ENCODE measurements at regions of chr15 and their contacts with region 1.

Region 1: DNA sequence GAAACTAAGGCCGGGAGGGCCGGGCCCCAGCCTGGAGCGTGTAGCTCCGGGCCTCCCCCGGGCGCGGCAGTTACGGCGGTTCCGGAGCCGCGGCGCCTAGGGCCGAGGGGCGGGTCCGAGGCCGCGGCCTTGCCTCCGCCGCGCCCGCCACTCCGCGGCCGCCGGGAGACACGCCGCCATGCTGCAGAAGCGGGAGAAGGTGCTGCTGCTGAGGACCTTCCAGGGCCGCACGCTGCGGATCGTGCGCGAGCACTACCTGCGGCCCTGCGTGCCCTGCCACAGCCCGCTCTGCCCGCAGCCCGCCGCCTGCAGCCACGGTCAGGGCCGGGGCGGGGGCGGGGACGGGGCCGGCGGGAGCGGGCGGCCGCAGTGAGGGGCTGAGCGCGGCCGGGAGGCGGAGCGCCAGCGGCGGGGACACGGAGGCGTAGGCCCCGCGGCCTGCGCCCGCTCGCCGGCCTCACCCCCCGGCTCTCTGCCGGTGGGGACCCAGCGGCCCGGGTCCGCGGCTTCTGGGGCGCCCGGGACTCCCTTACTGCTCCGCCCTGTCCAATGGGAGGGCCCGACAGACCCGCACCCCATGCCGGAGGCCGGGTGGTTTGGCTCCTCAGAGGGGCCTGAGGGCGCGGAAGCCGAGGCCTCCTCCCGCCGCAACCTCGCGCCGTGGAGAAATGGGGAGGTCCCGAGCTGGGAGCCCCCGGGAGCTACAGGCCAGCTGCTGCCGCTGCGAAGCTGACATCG is at the start of gene DIS3L:
- DNase-seq: peak in 1 of 2 experiments; percentile 52
- H3K4me3 ChIP-seq: peak within 1 kb of the TSS; percentile 52
- H3K27ac ChIP-seq: peak within 1 kb of the TSS; percentile 57
- H3K4me1 ChIP-seq: peaks cover 28% of the 10 kb centered on the region
- H3K27me3 ChIP-seq: no peaks in the 10 kb centered on the region
- CTCF ChIP-seq: no peak
- total RNA-seq, gene DIS3L: 27.7 and 31.2 TPM in 2 replicates

Region 2: DNA sequence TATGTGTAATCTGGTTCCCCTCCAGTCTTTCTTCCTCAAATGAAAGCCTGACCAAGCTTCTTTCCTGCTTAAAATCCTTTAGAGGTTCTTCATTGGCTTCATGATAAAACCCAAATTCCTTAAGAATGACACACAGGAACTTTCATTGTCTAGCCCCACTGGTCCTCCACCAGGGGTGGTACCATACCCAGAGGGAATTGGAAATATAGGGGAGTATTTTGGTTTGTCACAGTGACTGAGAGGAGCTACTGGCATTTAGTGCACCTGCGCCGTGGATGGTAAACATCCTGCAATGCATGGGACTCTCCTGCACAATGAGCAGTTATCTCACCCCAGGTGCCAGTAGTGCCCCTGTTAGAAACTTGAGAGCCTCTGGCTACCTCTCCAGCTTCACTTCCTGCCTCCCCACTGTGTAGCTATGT is 222.3 kb after region 1 on chr15:
- CTCF ChIA-PET with region 1: no interaction called
- POLR2A ChIA-PET with region 1: interaction called, 12 read pairs
- intact Hi-C with region 1: no loop called
- DNase-seq: peak; percentile 56 to 58
- H3K4me3 ChIP-seq: no peak overlapping the region
- H3K27ac ChIP-seq: peak overlapping the region; percentile 39
- H3K4me1 ChIP-seq: peaks cover 12% of the 10 kb centered on the region
- H3K27me3 ChIP-seq: no peaks in the 10 kb centered on the region
- CTCF ChIP-seq: no peak